ENCODE measurements at regions of chr7 and their contacts with region 1.

Region 1: GRCh38 chr7:118104812-118105441 is 79.0 kb upstream of the LSM8 start:
- DNase-seq: no peak
- H3K4me3 ChIP-seq: no peak overlapping the region
- H3K27ac ChIP-seq: no peak overlapping the region
- H3K4me1 ChIP-seq: no peaks in the 10 kb centered on the region
- H3K27me3 ChIP-seq: no peaks in the 10 kb centered on the region
- CTCF ChIP-seq: peak; percentile 66

Region 2: DNA sequence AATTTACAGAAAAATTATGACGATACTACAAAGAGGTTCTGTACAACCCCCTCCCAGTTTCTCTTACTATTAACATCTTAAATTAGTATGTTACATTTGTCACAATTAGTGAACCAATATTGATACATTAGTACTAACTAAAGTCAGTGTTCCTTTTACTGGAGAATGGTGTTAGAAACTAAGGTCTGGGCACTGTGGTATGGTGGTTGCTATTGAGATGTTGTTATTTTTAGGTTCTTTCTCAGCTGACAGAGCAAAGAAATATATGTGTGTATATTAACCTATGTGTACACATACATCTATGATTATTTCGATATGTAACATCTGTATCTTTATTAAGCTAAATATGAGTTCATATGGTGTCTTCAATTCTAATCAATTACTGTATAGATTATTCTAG is 636.8 kb before region 1 on chr7:
- CTCF ChIA-PET with region 1: no interaction called
- POLR2A ChIA-PET with region 1: no interaction called
- intact Hi-C with region 1: loop called (anchors 5 kb)
- DNase-seq: no peak
- H3K4me3 ChIP-seq: no peak overlapping the region
- H3K27ac ChIP-seq: no peak overlapping the region
- H3K4me1 ChIP-seq: no peaks in the 10 kb centered on the region
- H3K27me3 ChIP-seq: no peaks in the 10 kb centered on the region
- CTCF ChIP-seq: no peak

Region 3: DNA sequence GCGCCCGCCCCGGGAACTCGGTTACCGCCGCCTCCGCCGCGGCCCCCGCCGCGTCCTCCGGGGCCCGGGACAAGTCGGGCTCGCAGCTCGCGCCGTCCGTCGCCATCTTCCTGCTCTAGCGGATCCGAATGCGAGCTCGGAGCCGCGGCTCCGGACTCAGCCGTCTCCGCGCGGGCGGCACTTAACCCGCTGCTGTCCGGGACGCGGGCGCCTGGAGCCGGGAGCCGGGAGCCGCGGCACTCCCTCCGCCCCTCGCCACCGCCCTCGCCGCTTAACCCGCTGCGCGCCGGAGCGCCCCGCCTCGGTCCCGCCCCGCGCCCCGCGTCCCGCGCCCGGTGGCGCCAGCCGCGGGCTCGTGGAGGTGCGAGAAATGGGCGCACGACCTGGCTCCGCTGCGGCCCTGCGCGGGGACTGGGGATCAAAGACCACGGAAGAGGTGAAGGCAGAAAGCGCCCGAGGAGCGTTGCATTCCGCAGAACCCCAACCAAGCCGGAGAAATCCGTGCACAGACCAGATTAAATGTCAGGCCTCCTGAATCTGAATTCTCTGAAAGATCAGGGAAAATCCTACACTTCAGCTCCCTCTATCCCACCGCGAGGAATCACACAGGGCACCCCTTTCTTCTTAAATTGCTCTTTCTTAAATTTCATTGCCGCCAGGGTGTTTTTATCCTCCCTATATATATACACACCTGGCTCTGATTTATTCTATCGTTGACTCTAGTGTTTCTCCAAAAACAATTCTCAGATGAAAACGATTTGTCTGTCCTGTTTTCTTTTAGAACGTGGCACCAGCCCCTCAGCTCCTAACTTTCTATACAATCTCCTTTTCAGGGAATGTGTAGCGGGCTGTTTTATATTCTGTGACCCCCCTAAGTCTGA is 231.4 kb before region 1 on chr7 and contains the start of gene CTTNBP2:
- CTCF ChIA-PET with region 1: no interaction called
- POLR2A ChIA-PET with region 1: no interaction called
- intact Hi-C with region 1: loop called (anchors 10 kb)
- DNase-seq: no peak
- H3K4me3 ChIP-seq: no peak within 1 kb of the TSS
- H3K27ac ChIP-seq: no peak within 1 kb of the TSS
- H3K4me1 ChIP-seq: no peaks in the 10 kb centered on the region
- H3K27me3 ChIP-seq: no peaks in the 10 kb centered on the region
- CTCF ChIP-seq: no peak
- total RNA-seq, gene CTTNBP2: not detected in 2 replicates

Measured in PC-9 (cell line).